CD14-positive monocyte (primary cell): ENCODE measurements at regions of chr19 and their contacts with region 1.

Region 1: DNA sequence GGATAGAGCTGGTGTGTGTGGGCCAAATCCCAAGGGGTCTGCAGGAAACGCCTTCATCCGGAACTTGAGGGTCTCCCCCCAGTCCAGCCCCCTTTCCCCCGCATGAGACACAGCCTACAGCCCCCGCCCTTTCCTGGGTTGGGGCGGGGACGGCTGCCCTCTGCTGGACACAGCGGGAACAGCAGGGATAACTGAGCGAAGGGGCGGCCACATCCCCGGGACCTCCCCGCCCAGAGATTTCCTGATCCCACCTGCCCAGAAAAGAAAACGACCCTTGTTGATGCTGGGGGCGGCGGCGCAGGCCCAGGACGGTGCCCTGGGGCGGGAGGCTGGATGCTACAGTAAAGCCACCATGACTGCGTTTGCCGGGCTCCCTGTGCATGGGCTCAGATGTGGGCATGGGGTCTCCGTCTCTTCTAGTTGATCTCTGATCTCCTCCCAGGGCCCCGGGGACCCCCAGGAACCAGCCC is 14.2 kb downstream of the ONECUT3 start:
- DNase-seq: peak; percentile 9 to 24 (median 10)
- H3K4me3 ChIP-seq: no peak overlapping the region
- H3K4me3 Mint-ChIP-seq: peak overlapping the region in 1 of 2 donors; percentile 57
- H3K27ac ChIP-seq: no peak overlapping the region
- H3K27ac Mint-ChIP-seq: no peak overlapping the region
- H3K4me1 ChIP-seq: no peaks in the 10 kb centered on the region
- H3K4me1 Mint-ChIP-seq: peaks cover 2% of the 10 kb centered on the region
- H3K27me3 ChIP-seq: peaks cover 33 to 92% of the 10 kb centered on the region in 2 donors
- H3K27me3 Mint-ChIP-seq: peaks cover 75 to 98% (median 79%) of the 10 kb centered on the region in 3 donors
- CTCF ChIP-seq: peak; percentile 97

Region 2: DNA sequence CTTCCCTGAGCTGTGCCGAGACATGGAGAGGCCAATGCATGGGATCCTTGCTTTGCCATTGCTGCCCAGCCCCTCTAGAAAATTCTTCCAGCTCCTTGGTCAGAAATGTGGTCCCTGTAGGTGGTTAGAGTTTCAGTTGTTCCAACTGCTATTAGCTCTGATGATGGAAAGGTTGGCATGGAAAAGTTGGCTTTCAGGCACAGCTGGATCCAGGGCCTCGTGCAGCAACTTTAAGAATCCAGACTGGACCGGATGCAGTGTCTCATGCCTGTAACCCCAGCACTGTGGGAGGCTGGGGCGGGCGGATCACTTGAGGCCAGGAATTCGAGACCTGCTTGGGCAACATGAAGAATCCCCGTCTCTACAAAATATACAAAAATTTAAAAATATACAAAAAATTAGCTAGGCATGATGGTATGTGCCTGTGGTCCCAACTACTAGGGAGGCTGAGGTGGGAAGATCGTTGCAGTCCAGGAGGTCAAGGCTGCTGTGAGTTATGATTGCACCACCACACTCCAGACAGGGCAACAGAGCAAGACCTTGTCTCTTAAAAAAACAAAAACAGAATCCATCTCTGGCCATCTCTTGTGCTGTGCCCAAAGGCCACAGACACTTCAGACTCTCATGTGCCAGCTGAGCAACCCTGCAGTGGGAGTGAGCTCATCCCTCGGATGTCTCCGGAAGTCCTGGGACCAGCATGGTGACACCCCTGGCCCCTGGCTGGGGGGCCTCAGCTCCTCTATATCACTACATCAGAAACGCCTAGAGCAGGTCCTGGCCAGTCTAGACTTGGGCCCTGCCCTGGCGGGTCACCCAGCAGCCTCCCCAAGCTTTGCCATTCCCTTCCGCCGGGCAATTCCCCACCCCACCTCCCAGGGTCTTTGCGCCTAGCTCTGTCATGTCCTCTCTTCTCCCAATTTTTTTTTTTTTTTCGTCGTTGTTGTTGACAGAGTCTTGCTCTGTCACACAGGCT is 216.1 kb before region 1 on chr19:
- intact Hi-C with region 1: loop called (anchors 2 to 5 kb)
- DNase-seq: no peak
- H3K4me3 ChIP-seq: no peak overlapping the region
- H3K4me3 Mint-ChIP-seq: no peak overlapping the region
- H3K27ac ChIP-seq: no peak overlapping the region
- H3K27ac Mint-ChIP-seq: no peak overlapping the region
- H3K4me1 ChIP-seq: no peaks in the 10 kb centered on the region
- H3K4me1 Mint-ChIP-seq: peaks cover 1% of the 10 kb centered on the region
- H3K27me3 ChIP-seq: no peaks in the 10 kb centered on the region
- H3K27me3 Mint-ChIP-seq: peaks cover 10 to 17% (median 14%) of the 10 kb centered on the region in 3 donors
- CTCF ChIP-seq: no peak

Region 3: DNA sequence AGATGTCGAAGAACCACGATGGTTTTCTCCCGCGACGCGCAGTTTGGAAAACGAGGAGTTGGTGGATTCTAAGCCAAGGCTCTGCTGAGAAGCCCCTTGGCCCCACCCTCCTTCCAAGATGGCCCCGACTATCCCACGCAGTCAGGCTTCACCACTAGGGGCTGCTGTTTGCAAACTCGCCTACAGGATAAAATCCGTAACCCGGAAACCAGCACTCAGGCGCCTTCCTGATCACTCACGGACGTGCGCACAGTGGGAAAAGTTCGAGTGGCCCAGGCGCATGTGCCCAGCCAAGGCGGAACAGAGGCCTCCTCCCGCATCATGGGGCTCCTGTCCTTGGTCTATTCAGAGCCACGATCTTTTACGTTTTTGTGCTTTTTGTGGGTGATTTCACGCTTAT is 143.0 kb before region 1 on chr19:
- intact Hi-C with region 1: loop called in 1 of 2 experiments (anchors 10 kb)
- DNase-seq: peak; percentile 38 to 60 (median 56)
- H3K4me3 ChIP-seq: no peak overlapping the region
- H3K4me3 Mint-ChIP-seq: no peak overlapping the region
- H3K27ac ChIP-seq: no peak overlapping the region
- H3K27ac Mint-ChIP-seq: peak overlapping the region in 5 of 7 donors; percentile 13 to 54 (median 23)
- H3K4me1 ChIP-seq: no peaks in the 10 kb centered on the region
- H3K4me1 Mint-ChIP-seq: peaks cover 4% of the 10 kb centered on the region
- H3K27me3 ChIP-seq: no peaks in the 10 kb centered on the region
- H3K27me3 Mint-ChIP-seq: peaks cover 0 to 2% (median 0%) of the 10 kb centered on the region in 3 donors
- CTCF ChIP-seq: peak; percentile 72

Region 4: DNA sequence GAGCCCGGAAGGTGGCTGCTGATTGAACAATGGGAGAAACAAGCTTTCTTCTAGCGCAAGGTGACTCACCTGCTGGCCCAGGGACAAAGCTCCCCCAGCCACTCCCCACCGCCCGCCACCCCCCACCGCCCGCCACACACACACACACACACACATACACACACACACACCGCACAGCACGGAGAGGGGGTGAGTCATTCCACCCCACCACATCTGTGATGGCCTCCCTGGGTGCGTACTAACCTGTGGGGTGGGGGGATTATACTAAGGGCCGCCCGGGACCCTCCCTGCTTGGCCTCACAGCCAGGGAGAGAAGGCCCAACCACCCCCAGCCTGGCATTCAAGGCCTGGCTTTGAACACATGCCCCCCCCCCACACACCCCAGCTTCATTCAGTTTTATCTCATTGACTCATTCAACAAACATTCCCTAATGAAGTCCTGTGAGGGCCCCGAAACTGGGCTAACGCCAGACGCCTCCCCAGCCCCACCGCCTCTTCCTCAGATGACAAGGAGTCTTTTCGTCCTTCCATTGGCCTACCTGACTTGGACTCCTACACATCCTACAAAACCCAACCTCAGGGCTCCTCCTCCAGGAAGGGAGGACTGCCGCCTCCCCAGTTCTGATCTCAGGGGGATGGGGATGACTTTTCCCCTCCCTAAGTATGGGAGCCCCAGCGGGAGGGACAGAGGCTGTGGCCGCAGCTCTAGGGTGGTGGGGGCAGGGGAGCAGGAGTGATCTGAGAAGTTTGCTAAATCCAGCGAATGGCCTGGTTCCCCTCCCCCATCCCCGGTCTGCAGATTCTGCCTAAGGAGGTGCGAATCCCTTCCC is 20.0 kb before region 1 on chr19:
- intact Hi-C with region 1: no loop called
- DNase-seq: no peak
- H3K4me3 ChIP-seq: peak overlapping the region in 1 of 3 experiments; percentile 34
- H3K4me3 Mint-ChIP-seq: peak overlapping the region in 1 of 2 donors; percentile 84
- H3K27ac ChIP-seq: no peak overlapping the region
- H3K27ac Mint-ChIP-seq: peak overlapping the region in 1 of 7 donors; percentile 50
- H3K4me1 ChIP-seq: peaks cover 5 to 10% of the 10 kb centered on the region in 2 donors
- H3K4me1 Mint-ChIP-seq: peaks cover 14% of the 10 kb centered on the region
- H3K27me3 ChIP-seq: peaks cover 60 to 80% of the 10 kb centered on the region in 2 donors
- H3K27me3 Mint-ChIP-seq: peaks cover 59 to 91% (median 89%) of the 10 kb centered on the region in 3 donors
- CTCF ChIP-seq: no peak